SK-N-SH (cell line): ENCODE measurements at regions of chr1 and their contacts with region 1.

Region 1: GRCh38 chr1:29849038-29849750 is 612.9 kb downstream of the PTPRU start:
- DNase-seq: peak; percentile 45
- H3K4me3 ChIP-seq: peak overlapping the region in 1 of 2 experiments; percentile 3; a peak in 1 of 4 replicates
- H3K27ac ChIP-seq: no peak overlapping the region
- H3K4me1 ChIP-seq: no peaks in the 10 kb centered on the region; a peak in 1 of 4 replicates
- H3K27me3 ChIP-seq: no peaks in the 10 kb centered on the region
- CTCF ChIP-seq: peak; percentile 46; the same call in 1 of the 2 replicates
- EP300 ChIP-seq: no peak
- RAD21 ChIP-seq: peak; percentile 68

Region 2: GRCh38 chr1:29245876-29246275 is 603.3 kb before region 1 on chr1:
- CTCF ChIA-PET with region 1: interaction called, 10 read pairs
- POLR2A ChIA-PET with region 1: no interaction called
- DNase-seq: peak; percentile 68
- H3K4me3 ChIP-seq: no peak overlapping the region
- H3K27ac ChIP-seq: no peak overlapping the region
- H3K4me1 ChIP-seq: peaks cover 6 to 64% of the 10 kb centered on the region in 2 experiments; a peak in 2 of 4 replicates
- H3K27me3 ChIP-seq: no peaks in the 10 kb centered on the region
- CTCF ChIP-seq: peak; percentile 67
- EP300 ChIP-seq: no peak
- RAD21 ChIP-seq: peak; percentile 90

Region 3: DNA sequence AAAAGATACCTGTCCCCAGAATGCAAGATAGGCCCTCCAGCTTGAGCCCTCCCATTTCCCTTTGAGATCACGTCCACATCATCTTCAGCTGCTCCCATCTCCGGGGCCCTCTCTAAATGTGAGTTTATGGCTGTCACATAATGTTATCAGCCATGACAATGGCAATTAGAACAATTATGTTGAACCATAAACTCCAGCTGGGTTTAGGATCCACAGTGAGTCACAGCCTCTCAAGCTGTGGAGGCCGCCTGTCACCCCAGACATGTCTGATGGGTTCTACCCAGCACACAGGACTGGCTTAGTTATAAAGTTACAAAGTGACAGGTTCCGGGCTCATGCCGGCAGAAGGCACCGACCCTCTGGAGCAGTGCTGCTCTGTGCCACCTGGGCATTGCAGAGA is 15.6 kb before region 1 on chr1:
- CTCF ChIA-PET with region 1: interaction called, 16 read pairs
- POLR2A ChIA-PET with region 1: no interaction called
- DNase-seq: no peak
- H3K4me3 ChIP-seq: no peak overlapping the region
- H3K27ac ChIP-seq: no peak overlapping the region
- H3K4me1 ChIP-seq: peaks cover 0 to 51% of the 10 kb centered on the region in 2 experiments; a peak in 2 of 4 replicates
- H3K27me3 ChIP-seq: no peaks in the 10 kb centered on the region
- CTCF ChIP-seq: no peak
- EP300 ChIP-seq: no peak
- RAD21 ChIP-seq: no peak

Region 4: DNA sequence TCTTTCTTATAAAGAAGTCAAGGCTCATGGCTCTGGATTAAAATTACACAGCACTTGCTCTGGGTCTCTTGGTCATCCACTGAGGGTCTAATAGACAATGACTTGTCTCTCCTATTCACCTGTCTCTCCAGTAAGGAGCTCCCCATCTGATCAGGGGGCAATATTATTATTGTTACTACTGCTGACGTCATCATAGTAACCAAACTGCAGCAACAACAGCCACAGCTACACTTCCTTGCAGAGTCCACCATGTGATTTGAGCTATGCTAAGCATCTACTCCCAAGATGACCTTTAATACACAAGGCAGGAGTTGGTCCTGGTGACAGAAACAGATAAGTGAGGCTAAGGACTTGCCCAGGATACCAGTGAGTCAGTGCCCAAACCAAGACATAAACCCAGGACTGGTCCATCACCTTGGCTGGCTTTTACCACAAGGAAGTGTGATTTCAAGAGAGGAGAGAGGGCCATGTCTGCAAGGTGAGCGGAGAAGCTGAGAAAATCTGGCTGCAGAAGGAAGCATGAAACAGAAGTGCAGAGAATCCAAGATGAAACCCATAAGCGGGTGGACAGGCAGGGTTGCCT is 10.4 kb before region 1 on chr1:
- CTCF ChIA-PET with region 1: interaction called, 16 read pairs
- POLR2A ChIA-PET with region 1: no interaction called
- DNase-seq: no peak
- H3K4me3 ChIP-seq: no peak overlapping the region
- H3K27ac ChIP-seq: no peak overlapping the region
- H3K4me1 ChIP-seq: peaks cover 0 to 9% of the 10 kb centered on the region in 2 experiments; a peak in 1 of 4 replicates
- H3K27me3 ChIP-seq: no peaks in the 10 kb centered on the region
- CTCF ChIP-seq: no peak
- EP300 ChIP-seq: no peak
- RAD21 ChIP-seq: no peak